BJ (cell line): ENCODE measurements at regions of chr5 and their contacts with region 1.

Region 1: DNA sequence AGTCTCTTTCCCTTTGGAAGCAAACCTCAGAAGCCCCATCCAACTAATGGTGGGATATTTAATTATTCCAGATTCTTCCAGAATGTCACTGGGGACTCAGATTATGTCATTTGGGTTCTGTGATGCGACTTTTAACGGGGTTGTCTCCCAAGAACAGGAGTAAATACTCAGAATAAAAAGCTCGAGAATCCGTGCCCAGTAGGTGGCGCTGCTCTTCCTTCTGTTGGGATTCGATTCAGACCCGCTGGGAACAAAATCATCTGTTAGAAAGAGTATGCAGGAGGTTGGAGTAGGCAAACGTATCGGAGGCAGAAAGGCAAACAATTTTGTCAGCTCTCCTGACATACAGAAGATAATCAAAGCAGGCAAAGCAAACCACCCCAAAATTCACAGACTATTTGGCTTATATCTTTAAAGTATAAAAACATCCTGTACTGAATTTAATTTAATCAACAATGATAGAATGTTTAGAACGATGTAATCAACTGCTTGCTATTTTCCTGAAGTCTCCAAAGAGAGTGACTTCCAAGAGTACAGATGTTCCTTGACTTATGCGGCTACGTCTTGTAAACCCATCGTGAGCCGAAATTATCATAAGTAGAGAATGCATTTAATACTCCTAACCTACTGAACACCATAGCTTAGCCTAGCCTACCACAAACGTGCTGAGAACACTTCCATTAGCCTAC is 169.8 kb upstream of the RAI14 start:
- DNase-seq: no peak
- H3K4me3 ChIP-seq: no peak overlapping the region
- H3K27me3 ChIP-seq: no peaks in the 10 kb centered on the region
- CTCF ChIP-seq: peak; percentile 82

Region 2: DNA sequence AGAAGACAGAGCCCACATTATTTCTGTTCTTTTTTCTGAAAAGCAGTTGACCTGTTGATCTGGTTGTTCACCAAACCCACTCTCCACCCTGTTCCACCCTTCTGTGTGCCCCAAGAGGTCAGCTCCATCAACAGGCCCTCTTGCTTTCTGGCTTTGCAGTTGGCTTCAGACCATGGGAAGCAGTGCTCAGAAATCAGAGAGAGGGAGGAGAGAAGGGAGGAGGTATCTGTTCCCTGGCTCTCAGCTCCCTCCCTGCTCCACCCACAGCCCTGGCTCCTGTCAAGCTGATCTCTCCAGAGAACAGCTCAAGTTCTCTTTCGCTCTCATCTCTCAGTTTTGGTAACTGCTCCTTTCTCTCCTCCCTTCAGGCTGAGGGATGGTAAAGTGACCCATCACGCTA is 25.6 kb after region 1 on chr5:
- CTCF ChIA-PET with region 1: interaction called, 12 read pairs
- POLR2A ChIA-PET with region 1: no interaction called
- DNase-seq: no peak
- H3K4me3 ChIP-seq: no peak overlapping the region
- H3K27me3 ChIP-seq: no peaks in the 10 kb centered on the region
- CTCF ChIP-seq: no peak

Region 3: GRCh38 chr5:34891981-34892380 is 405.7 kb after region 1 on chr5:
- CTCF ChIA-PET with region 1: interaction called, 38 read pairs
- POLR2A ChIA-PET with region 1: no interaction called
- DNase-seq: peak; percentile 70
- H3K4me3 ChIP-seq: no peak overlapping the region
- H3K27me3 ChIP-seq: no peaks in the 10 kb centered on the region
- CTCF ChIP-seq: no peak

Region 4: GRCh38 chr5:34905564-34905963 is 419.3 kb after region 1 on chr5:
- CTCF ChIA-PET with region 1: interaction called, 16 read pairs
- POLR2A ChIA-PET with region 1: interaction called, 5 read pairs
- DNase-seq: no peak
- H3K4me3 ChIP-seq: no peak overlapping the region
- H3K27me3 ChIP-seq: no peaks in the 10 kb centered on the region
- CTCF ChIP-seq: peak; percentile 54